HEK293 (cell line): ENCODE measurements at regions of chr12 and their contacts with region 1.

Region 1: DNA sequence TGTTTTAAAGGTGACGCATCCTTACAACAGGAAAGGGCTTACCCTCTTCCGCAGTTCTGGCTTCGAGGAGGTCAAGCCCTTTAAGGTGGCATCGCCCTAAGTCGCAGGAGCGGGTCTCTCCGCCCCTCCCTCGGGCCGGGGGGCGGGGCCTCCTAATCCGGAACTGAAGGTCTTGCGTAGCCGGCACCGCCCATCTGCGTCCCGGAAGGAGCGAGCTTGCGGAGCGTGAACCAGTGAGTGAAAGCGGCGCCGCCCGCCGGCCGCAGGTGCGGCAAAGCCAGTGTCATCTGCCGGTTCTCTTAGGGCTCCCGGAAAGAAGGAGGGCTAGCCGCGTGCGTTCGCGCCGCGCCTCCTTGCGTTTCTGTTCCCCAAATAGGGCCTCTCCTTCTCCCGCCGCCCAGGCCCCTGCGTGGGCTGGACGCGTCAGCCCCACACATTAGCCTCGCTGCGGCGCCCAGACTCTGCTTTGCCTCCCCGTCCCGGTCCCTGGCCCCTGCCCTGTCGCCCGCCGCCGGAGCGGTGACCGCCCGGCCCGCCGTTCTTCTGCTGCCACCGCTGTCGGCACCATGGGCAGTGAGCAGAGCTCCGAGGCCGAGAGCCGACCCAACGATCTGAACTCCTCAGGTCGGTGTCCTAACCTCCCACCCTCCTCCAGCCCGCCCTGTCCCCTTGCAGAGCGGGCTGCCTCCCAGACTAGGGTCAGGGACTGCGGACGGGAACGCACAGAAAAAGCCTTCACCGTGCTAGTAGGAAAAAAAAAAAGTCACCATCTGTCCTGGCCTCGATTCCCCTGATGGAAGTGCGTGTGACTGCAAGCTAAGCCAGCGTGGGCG is at the start of gene BORCS5:
- H3K4me3 ChIP-seq: peak within 1 kb of the TSS; percentile 83
- H3K27ac ChIP-seq: peak within 1 kb of the TSS; percentile 87
- H3K4me1 ChIP-seq: peaks cover 5% of the 10 kb centered on the region
- CTCF ChIP-seq: peak; percentile 90

Region 2: GRCh38 chr12:12266873-12267741 is 90.0 kb before region 1 on chr12 and contains the start of gene LRP6:
- CTCF ChIA-PET with region 1: no interaction called
- POLR2A ChIA-PET with region 1: interaction called, 12 read pairs
- H3K4me3 ChIP-seq: peak within 1 kb of the TSS; percentile 98
- H3K27ac ChIP-seq: peak within 1 kb of the TSS; percentile 100
- H3K4me1 ChIP-seq: no peaks in the 10 kb centered on the region; the same call in 1 of the 2 replicates
- CTCF ChIP-seq: peak; percentile 63

Region 3: DNA sequence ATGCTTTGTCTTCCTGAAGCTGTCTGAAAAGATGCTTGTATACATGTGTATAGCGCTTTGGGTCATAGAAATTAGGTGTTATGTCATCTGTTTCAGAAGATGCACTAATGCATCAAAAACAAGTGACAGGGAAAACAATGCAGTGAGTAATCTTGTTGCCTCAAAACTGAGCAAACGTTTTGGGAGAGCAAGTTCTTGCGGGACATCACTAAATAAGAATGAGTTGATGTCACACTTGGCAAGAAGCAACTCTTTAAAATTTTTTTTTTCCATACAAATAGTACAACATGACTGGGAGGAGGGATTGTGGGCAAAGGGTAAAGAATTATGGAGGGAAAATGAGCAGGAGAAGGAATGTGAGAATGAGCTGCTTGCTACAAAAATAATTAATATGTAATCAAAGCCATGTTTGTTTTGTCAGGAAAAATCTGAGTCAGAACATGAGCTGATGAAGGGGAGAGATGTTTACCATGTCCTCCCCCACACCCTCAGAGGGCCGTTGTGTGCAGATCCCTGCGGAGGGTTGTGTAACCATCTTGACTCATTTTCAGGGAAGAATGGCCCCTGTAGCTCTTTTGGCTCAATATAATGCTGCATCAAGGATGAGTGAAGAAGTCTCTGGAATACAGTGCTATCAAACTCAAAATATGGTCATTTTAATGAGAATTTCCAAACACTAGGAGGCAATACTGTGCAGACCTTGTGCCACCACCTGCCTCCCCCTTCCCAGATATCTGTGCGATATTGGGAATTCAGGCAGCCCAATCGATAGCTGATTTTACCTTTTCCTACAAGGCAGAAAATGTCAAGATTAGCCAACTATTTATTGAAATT is 41.1 kb after region 1 on chr12:
- CTCF ChIA-PET with region 1: no interaction called
- POLR2A ChIA-PET with region 1: no interaction called
- H3K4me3 ChIP-seq: no peak overlapping the region
- H3K27ac ChIP-seq: no peak overlapping the region; the same call in 1 of the 2 replicates
- H3K4me1 ChIP-seq: peaks cover 15% of the 10 kb centered on the region
- CTCF ChIP-seq: no peak